Naive thymus-derived CD4-positive, alpha-beta T cell (primary cell): ENCODE measurements at regions of chr11 and their contacts with region 1.

Region 1: DNA sequence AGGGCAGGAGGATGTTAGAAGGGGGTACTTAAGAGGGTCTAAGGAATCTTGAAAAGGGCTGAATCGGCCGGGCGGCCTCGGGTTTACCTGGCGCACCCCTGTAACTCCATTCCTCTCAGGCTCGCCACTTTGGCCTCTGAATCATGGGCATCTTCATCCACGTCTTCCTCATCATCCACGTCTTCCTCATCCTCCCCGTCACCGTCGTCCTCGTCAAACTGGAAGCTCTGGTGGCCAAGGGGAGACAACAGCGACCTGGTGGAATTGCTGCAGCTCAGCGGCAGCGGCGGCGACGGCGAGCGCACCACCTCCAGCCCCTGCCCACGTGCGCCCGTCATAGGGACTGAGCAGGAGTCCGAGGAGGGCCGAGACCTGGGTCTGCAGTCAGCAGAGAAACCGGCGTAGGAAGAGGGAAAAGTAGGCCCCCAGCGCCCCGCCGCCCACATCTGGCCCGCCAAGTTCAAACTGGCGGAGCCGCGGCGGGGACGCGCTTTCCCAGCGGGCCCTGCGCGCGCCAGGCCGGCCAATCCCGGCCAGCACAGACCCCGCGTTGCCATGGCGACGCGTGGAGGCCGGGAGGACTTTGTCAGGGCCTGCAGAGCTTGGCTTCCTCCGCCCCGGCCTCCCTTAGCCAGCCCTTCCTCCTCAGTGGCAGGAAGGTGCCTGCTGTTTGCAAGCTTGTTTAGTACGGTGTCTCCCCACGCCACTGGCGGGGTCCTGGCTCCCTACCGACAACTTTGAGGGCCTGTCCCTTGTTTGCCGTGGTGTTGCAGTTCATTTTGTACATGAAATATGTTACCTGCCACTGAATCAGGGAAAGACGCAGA is at the start of gene CCDC34:
- DNase-seq: peak; percentile 83 to 91 (median 90)
- ATAC-seq: peak; percentile 99
- H3K4me3 ChIP-seq: peak within 1 kb of the TSS; percentile 51
- H3K4me3 Mint-ChIP-seq: peak within 1 kb of the TSS; percentile 78 to 96 (median 91)
- H3K27ac ChIP-seq: peak within 1 kb of the TSS; percentile 66
- H3K27ac Mint-ChIP-seq: peak within 1 kb of the TSS; percentile 80 to 97 (median 87)
- H3K4me1 ChIP-seq: peaks cover 10 to 12% of the 10 kb centered on the region in 2 donors
- H3K4me1 Mint-ChIP-seq: peaks cover 12 to 48% (median 28%) of the 10 kb centered on the region in 7 donors
- H3K27me3 ChIP-seq: no peaks in the 10 kb centered on the region
- H3K27me3 Mint-ChIP-seq: no peaks in the 10 kb centered on the region
- total RNA-seq, gene CCDC34: 1.3 to 10.0 (median 3.6) TPM

Region 2: GRCh38 chr11:27472398-27473016 is 109.5 kb after region 1 on chr11 and contains the start of gene LGR4:
- CTCF ChIA-PET with region 1: interaction called, 3 read pairs
- POLR2A ChIA-PET with region 1: no interaction called
- intact Hi-C with region 1: loop called in 1 of 2 experiments (anchors 1 kb)
- DNase-seq: peak; percentile 33 to 79 (median 70)
- ATAC-seq: peak; percentile 90
- H3K4me3 ChIP-seq: peak within 1 kb of the TSS; percentile 73
- H3K4me3 Mint-ChIP-seq: peak within 1 kb of the TSS; percentile 88 to 98 (median 96)
- H3K27ac ChIP-seq: peak within 1 kb of the TSS; percentile 33
- H3K27ac Mint-ChIP-seq: peak within 1 kb of the TSS; percentile 18 to 90 (median 77)
- H3K4me1 ChIP-seq: peaks cover 4 to 10% of the 10 kb centered on the region in 2 donors
- H3K4me1 Mint-ChIP-seq: peaks cover 6 to 29% (median 21%) of the 10 kb centered on the region in 7 donors
- H3K27me3 ChIP-seq: no peaks in the 10 kb centered on the region
- H3K27me3 Mint-ChIP-seq: peaks cover 0 to 59% (median 7%) of the 10 kb centered on the region in 5 donors
- total RNA-seq, gene LGR4: 0.05 to 1.5 (median 0.95) TPM

Region 3: DNA sequence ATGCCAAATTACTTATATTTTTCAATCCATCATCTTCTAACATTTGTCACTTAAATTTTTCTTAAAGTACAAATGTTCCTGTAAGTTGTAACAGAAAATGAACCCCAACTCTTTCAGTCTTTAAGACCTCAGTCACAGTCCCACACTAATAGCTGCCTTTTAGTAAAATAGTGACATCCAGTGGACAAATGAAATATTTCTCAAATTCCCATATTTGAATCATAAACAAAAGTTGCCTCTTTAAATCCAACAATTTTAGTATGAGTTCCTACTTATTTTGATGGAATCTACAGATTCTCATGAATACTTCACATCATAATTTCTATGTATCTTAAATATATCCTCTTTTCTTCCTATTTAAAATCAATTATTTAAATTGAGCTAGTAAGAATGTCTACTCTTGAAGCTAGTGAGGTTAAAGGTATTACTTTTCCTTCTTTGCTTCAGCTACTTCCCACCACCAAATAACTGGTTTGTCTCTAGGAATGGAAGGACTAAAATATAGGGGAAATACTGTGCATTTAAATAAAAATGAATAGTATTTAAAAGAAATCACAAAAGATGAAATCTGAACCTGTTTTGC is 134.4 kb after region 1 on chr11:
- CTCF ChIA-PET with region 1: no interaction called
- POLR2A ChIA-PET with region 1: no interaction called
- intact Hi-C with region 1: loop called in 1 of 2 experiments (anchors 2 kb)
- DNase-seq: peak in 2 of 9 donors; percentile 13 to 22
- ATAC-seq: peak; percentile 46
- H3K4me3 ChIP-seq: no peak overlapping the region
- H3K4me3 Mint-ChIP-seq: peak overlapping the region in 1 of 10 donors; percentile 32
- H3K27ac ChIP-seq: no peak overlapping the region
- H3K27ac Mint-ChIP-seq: no peak overlapping the region
- H3K4me1 ChIP-seq: peaks cover 9 to 11% of the 10 kb centered on the region in 2 donors
- H3K4me1 Mint-ChIP-seq: peaks cover 12 to 42% (median 30%) of the 10 kb centered on the region in 7 donors
- H3K27me3 ChIP-seq: no peaks in the 10 kb centered on the region
- H3K27me3 Mint-ChIP-seq: no peaks in the 10 kb centered on the region

Region 4: DNA sequence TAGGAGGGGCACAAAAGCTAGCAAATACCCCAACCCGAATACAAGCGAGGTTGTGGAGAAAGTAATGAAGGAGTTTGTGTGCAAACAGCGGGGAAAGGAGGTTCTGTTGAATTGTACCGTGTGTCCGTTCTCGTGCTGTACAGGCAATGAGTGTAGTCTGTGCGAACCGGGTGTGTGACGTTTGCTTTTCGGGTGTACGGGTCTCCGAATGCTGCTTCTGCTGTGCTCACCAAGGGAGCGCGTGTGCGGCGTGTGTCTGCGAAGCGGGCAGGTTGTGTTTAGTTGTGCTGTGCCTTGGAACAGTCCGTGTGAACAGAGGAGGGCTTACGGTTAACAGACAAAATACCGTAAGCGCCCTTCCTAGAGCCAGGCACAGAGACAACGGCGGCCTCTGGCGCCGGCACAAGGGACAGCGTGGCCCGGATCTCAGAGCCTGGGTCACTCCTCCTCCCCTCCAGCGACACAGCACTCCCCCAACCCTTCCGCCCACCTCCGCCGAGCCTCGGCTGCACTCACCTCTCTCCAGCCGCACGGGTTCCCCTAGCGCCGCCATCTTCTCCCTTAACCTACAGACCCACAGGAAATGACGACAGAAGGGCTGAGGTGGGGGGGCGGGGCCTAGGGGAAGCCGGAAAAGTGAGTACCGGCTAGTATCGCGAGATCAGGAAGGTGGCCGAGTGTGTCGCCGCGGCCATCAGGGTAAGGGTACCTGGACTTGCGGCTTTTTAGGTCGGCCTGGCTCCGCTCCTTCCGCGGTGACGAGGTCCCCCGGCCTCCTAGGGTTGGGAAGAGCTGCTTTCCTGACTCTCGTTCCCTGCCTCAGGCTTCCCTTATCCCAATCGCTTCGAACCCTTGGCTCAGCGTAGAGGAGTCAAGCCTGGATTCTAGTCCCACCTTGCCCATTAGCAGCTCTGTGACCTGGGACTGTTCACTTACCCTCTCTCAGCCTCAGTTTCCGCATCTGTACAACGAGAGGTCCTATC is 143.5 kb after region 1 on chr11 and contains the start of gene LIN7C:
- CTCF ChIA-PET with region 1: no interaction called
- POLR2A ChIA-PET with region 1: no interaction called
- intact Hi-C with region 1: loop called (anchors 1 kb)
- DNase-seq: peak; percentile 69 to 98 (median 90)
- ATAC-seq: peak; percentile 95
- H3K4me3 ChIP-seq: peak within 1 kb of the TSS; percentile 92
- H3K4me3 Mint-ChIP-seq: peak within 1 kb of the TSS; percentile 88 to 100 (median 99)
- H3K27ac ChIP-seq: peak within 1 kb of the TSS; percentile 89
- H3K27ac Mint-ChIP-seq: peak within 1 kb of the TSS; percentile 96 to 100 (median 99)
- H3K4me1 ChIP-seq: peaks cover 18 to 34% of the 10 kb centered on the region in 2 donors
- H3K4me1 Mint-ChIP-seq: peaks cover 32 to 71% (median 61%) of the 10 kb centered on the region in 7 donors
- H3K27me3 ChIP-seq: no peaks in the 10 kb centered on the region
- H3K27me3 Mint-ChIP-seq: no peaks in the 10 kb centered on the region
- total RNA-seq, gene LIN7C: 21.4 to 31.3 (median 25.4) TPM